ENCODE measurements at regions of chr1 and their contacts with region 1.

Region 1: DNA sequence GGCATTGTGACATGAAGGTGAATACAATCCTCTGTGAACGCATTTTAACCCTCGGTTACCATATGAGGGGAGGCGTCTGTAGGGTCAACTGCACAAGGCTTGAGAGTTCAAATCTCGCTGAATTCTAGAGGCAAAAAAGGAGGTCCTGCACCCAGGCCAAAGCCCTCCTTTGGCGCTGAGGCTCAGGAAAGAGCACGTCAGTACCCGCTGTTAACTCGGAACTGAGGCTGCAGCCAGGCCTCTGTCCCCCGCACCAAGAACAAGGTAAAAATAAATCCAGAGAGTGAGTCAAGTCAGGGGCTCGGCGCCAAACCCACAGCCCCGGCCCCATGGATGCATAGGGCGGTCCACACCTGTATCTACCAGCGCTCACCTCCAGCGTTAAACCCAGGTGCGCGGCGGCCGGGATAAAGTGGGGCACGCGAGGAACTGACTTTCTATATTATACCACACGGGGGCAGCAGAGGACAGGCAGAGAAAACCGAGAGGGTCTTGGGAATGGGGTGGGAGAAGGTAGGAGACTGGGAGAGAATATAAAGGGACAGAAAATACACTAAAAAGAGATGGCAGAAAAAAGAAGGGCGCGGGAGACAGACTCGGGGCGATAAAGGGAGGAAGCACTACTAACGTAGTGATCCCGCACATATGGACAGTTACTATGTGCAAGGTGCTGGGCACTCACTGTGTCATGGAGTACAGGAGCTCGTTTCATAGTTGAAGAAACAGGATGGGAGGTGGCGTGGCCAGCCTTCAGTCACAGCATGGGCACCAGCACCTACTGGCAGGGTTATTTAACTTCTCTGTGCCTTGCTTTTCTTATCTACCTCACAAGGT is 54.8 kb downstream of the DMRTA2 start:
- DNase-seq: peak; percentile 48
- H3K4me3 Mint-ChIP-seq: no peak overlapping the region
- H3K27ac Mint-ChIP-seq: no peak overlapping the region
- H3K4me1 Mint-ChIP-seq: no peaks in the 10 kb centered on the region
- H3K27me3 Mint-ChIP-seq: peaks cover 39% of the 10 kb centered on the region

Region 2: GRCh38 chr1:50175719-50176639 is 192.4 kb before region 1 on chr1:
- CTCF ChIA-PET with region 1: no interaction called
- intact Hi-C with region 1: no loop called
- DNase-seq: no peak
- H3K4me3 Mint-ChIP-seq: no peak overlapping the region
- H3K27ac Mint-ChIP-seq: no peak overlapping the region
- H3K4me1 Mint-ChIP-seq: no peaks in the 10 kb centered on the region
- H3K27me3 Mint-ChIP-seq: peaks cover 11% of the 10 kb centered on the region

Region 3: DNA sequence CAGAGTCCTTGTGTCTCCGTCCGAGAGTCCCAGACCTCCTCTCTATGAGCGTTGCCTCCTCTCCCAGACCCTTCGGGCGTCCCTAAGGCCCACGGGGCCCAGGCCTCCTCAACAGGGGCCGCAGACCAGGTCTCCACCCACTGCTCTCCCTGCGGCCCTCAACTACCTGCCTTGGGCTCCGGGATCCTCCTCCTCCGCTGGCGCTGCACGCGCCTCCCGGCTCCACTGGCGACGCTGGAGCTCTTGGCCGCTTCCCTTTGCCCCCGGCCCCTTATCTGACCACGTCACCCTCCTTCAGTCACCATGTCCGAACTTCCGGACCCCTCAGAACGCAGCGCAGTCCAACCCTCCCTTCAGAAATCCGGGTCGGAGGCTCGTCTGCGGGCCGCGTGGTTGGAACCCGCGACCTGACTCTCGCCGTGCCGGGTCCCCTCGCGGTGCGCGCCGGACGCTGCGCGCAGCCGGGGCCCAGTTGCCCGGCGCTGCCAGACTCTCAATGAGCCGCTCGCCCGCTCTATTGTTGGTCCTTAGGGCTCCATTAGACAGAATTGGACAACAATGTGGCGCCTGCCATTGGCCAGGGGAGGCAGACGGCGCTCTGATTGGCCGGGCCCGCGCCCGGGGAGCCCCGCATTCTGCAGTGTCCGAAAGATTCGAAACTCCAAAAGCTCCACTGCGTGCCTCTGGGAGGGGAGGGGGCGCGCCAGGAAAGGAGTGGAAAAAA is 54.7 kb after region 1 on chr1 and contains the start of gene DMRTA2:
- CTCF ChIA-PET with region 1: no interaction called
- intact Hi-C with region 1: loop called (anchors 2 kb)
- DNase-seq: no peak
- H3K4me3 Mint-ChIP-seq: peak within 1 kb of the TSS; percentile 80
- H3K27ac Mint-ChIP-seq: peak within 1 kb of the TSS; percentile 47
- H3K4me1 Mint-ChIP-seq: peaks cover 58% of the 10 kb centered on the region
- H3K27me3 Mint-ChIP-seq: peaks cover 77% of the 10 kb centered on the region
- total RNA-seq, gene DMRTA2: 0.07 TPM in 1 of 2 experiments, not detected in the other

Region 4: GRCh38 chr1:50605186-50605875 is 236.9 kb after region 1 on chr1:
- CTCF ChIA-PET with region 1: interaction called, 4 read pairs
- intact Hi-C with region 1: loop called (anchors 1 kb)
- DNase-seq: peak; percentile 31
- H3K4me3 Mint-ChIP-seq: no peak overlapping the region
- H3K27ac Mint-ChIP-seq: no peak overlapping the region
- H3K4me1 Mint-ChIP-seq: no peaks in the 10 kb centered on the region
- H3K27me3 Mint-ChIP-seq: no peaks in the 10 kb centered on the region

Region 5: DNA sequence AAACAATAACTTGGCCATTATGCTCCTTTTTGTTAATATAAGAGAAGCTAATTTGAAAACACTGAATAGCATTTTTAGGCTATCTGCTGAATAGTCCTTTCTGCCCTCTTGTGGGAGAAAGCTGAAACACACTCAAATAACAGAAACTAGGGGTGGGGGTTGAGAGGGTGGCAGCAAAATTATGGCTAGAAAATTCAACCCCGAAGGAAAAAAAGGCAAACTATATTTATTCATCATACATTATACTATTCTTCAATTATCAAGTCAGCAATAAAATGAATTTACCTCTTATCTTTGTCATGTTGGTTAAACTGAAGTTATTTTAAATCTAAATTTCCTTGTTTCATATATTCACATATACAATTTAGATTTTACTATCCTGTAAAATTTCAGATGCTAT is 335.7 kb after region 1 on chr1:
- CTCF ChIA-PET with region 1: no interaction called
- intact Hi-C with region 1: loop called (anchors 1 kb)
- DNase-seq: no peak
- H3K4me3 Mint-ChIP-seq: no peak overlapping the region
- H3K27ac Mint-ChIP-seq: no peak overlapping the region
- H3K4me1 Mint-ChIP-seq: no peaks in the 10 kb centered on the region
- H3K27me3 Mint-ChIP-seq: no peaks in the 10 kb centered on the region

Region 6: DNA sequence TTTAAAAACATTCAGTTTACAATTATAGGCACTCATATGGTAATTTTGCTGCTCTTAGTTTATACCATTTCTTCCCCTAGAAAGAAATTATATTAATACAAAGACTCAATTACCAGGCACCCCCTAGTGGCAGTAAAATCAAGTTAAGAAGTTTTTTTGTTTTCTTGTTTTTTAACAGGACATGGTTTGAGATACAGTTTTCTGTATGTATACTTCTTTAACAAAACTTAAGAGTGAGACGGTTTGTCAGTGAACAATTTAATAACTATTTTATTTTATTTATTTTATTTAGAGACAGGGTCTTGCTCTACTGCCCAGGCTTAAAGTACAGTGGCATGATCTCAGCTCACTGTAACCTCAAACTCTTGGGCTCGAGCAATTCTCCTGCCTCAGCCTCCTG is 367.0 kb after region 1 on chr1:
- CTCF ChIA-PET with region 1: no interaction called
- intact Hi-C with region 1: loop called (anchors 2 kb)
- DNase-seq: no peak
- H3K4me3 Mint-ChIP-seq: no peak overlapping the region
- H3K27ac Mint-ChIP-seq: no peak overlapping the region
- H3K4me1 Mint-ChIP-seq: no peaks in the 10 kb centered on the region
- H3K27me3 Mint-ChIP-seq: no peaks in the 10 kb centered on the region

Measured in activated naive CD4-positive, alpha-beta T cell treated with anti-CD3 and anti-CD28 coated beads for 36 hours (primary cell).